ENCODE measurements at regions of chr15 and their contacts with region 1.

Region 1: GRCh38 chr15:44489464-44489863 is 47.5 kb upstream of the EIF3J start:
- DNase-seq: no peak
- H3K4me3 Mint-ChIP-seq: no peak overlapping the region
- H3K27ac Mint-ChIP-seq: peak overlapping the region; percentile 64
- H3K4me1 Mint-ChIP-seq: peaks cover 27% of the 10 kb centered on the region
- H3K27me3 Mint-ChIP-seq: no peaks in the 10 kb centered on the region

Region 2: GRCh38 chr15:44450172-44450571 is 39.3 kb before region 1 on chr15:
- intact Hi-C with region 1: loop called (anchors 5 kb)
- DNase-seq: no peak
- H3K4me3 Mint-ChIP-seq: no peak overlapping the region
- H3K27ac Mint-ChIP-seq: no peak overlapping the region
- H3K4me1 Mint-ChIP-seq: peaks cover 31% of the 10 kb centered on the region
- H3K27me3 Mint-ChIP-seq: no peaks in the 10 kb centered on the region